Spleen (tissue), 13 donors: ENCODE measurements at regions of chr19 and their contacts with region 1.

Region 1: DNA sequence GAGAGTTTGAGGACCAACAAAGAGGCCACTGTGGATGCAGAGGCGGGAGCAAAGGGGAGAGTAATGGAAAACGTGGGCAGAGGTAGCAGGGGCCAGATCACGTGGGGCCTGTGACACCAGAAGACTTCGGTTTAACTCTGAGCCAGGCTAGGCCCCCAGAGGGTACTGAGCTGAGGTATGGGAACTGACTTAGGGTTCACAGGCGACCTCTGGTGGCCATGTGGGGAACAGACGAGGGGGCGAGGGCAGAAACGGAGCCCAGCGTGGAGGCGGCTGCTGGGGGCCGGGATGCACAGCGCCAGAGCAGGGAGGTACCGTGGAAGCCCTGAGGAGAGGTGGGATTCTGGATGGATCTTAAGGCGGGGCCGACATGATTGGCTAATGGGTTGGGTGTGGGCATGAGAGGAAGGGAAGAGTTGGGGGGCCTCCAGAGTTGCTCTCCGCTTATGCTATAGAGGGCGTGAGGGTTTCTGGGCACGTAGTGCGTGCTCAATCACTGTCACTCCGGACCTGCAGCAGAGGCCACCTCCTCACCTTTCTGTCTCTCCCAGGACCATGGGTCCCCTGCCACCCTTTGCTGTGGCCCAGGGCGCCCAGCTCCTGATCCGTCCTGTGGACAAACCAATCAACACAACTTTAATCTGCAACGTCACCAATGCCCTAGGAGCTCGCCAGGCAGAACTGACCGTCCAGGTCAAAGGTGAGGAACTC is 13.7 kb downstream of the PVR start:
- DNase-seq: peak; percentile 88
- H3K4me3 ChIP-seq: no peak overlapping the region
- H3K27ac ChIP-seq: no peak overlapping the region
- H3K4me1 ChIP-seq: peaks cover 2 to 25% (median 13%) of the 10 kb centered on the region in 6 donors
- H3K27me3 ChIP-seq: no peaks in the 10 kb centered on the region
- CTCF ChIP-seq: peak; percentile 77 to 97 (median 90)
- POLR2A ChIP-seq: no peak

Region 2: DNA sequence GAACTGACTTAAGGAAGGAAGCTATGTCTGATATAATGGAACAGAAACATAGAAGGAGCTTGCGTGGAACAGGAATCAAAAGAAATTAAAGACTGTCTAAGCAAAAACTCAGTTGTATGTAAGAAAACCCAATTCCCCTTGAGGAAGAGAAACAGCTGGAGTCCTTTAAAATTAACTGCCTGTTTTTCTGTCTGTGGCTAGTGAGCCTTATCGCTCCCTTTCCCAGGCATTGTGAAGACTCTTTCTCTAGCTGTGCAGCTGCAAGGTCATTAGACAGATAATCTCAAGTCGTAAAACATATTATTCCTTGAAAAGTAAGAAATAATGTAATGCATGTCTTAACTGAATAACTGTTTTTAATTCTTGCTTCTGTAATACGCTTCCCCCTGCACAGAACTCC is 83.7 kb before region 1 on chr19:
- intact Hi-C with region 1: loop called (anchors 2 kb)
- DNase-seq: no peak
- H3K4me3 ChIP-seq: no peak overlapping the region
- H3K27ac ChIP-seq: no peak overlapping the region
- H3K4me1 ChIP-seq: peaks cover 0 to 25% (median 3%) of the 10 kb centered on the region in 6 donors
- H3K27me3 ChIP-seq: peaks cover 0 to 4% (median 0%) of the 10 kb centered on the region in 7 donors
- CTCF ChIP-seq: no peak
- POLR2A ChIP-seq: no peak